ENCODE measurements at regions of chr9 and their contacts with region 1.

Region 1: GRCh38 chr9:32968101-32969011 is 33.1 kb downstream of the APTX start:
- DNase-seq: peak; percentile 15 to 39 (median 30)
- H3K4me3 ChIP-seq: no peak overlapping the region
- H3K4me3 Mint-ChIP-seq: no peak overlapping the region
- H3K27ac ChIP-seq: no peak overlapping the region
- H3K27ac Mint-ChIP-seq: no peak overlapping the region
- H3K4me1 ChIP-seq: no peaks in the 10 kb centered on the region
- H3K4me1 Mint-ChIP-seq: no peaks in the 10 kb centered on the region
- H3K27me3 ChIP-seq: no peaks in the 10 kb centered on the region
- H3K27me3 Mint-ChIP-seq: peaks cover 0 to 4% (median 2%) of the 10 kb centered on the region in 3 donors
- CTCF ChIP-seq: peak; percentile 83

Region 2: DNA sequence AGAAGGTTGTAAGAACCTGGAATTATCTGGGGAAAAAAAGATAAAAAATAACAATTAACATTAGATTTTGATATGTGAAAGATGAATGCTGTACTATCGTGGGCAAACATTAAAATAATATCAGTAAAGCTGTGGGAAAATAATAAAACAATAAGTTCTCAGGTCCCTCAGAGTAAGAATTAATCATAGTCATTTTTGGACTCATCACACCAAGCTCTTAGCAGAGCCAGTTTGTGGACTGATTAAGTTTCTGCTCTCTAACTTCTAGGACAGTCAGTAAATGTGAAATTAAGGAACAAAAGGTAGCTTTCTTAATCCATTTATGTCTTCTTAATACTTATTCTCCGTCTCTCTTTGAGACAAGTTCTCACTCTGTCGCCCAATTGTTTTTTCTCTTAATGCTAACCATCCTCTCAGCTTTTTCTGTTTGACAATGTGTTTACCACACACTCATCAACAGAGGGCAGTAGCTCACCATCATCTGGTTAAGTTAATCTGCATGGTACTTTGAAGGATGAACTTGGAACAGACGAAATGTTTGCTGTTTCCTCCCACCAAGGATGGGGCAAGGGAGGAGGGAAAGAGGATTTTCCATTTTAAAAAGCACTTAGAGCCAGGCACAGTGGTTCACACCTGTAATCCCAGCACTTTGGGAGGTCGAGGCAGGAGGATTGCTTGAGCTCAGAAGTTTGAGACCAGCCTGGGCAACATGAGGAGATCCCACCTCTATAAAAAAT is 589.2 kb before region 1 on chr9:
- intact Hi-C with region 1: loop called in 1 of 2 experiments (anchors 5 kb)
- DNase-seq: peak; percentile 50 to 68 (median 62)
- H3K4me3 ChIP-seq: no peak overlapping the region
- H3K4me3 Mint-ChIP-seq: no peak overlapping the region
- H3K27ac ChIP-seq: no peak overlapping the region
- H3K27ac Mint-ChIP-seq: no peak overlapping the region
- H3K4me1 ChIP-seq: peaks cover 7 to 8% of the 10 kb centered on the region in 2 donors
- H3K4me1 Mint-ChIP-seq: peaks cover 15% of the 10 kb centered on the region
- H3K27me3 ChIP-seq: peaks cover 13 to 17% of the 10 kb centered on the region in 2 donors
- H3K27me3 Mint-ChIP-seq: peaks cover 25 to 36% (median 26%) of the 10 kb centered on the region in 3 donors
- CTCF ChIP-seq: peak; percentile 66

Region 3: DNA sequence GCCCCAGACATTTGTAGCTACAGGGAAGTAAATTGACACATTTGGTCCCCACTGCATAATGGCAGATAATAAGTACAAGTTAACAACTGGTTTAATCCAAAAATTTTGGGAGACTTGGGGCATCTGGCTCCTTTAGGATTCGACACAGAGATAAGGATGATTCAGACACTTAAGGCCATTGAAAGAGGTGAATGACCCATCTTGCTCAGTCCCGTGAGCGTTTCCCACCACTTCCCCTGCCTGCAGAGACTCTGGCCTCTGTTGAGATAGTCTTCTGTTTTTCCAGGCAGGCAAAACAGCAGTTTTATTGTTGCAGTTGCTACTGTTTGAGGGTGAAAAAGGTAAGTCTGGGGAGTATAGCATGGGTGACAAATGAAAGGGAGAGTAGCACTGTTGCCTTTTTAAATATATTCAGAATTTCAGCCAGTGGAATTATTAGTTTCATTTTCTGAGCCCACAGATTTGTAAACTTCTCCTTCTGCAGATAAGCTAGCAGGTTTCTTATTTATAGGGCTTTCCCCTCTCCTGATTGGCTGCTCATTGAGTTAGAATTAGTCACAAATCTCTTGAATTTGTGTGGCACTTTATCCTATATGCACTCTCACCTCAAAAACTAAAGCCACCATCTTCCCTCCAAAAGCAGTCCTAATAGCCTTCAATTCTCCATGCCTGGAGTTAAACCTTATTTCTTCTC is 564.6 kb before region 1 on chr9:
- intact Hi-C with region 1: loop called in 1 of 2 experiments (anchors 10 kb)
- DNase-seq: no peak
- H3K4me3 ChIP-seq: no peak overlapping the region
- H3K4me3 Mint-ChIP-seq: peak overlapping the region in 1 of 2 donors; percentile 64
- H3K27ac ChIP-seq: no peak overlapping the region
- H3K27ac Mint-ChIP-seq: peak overlapping the region in 1 of 7 donors; percentile 0
- H3K4me1 ChIP-seq: no peaks in the 10 kb centered on the region
- H3K4me1 Mint-ChIP-seq: peaks cover 9% of the 10 kb centered on the region
- H3K27me3 ChIP-seq: no peaks in the 10 kb centered on the region
- H3K27me3 Mint-ChIP-seq: peaks cover 0 to 1% (median 0%) of the 10 kb centered on the region in 3 donors
- CTCF ChIP-seq: no peak

Region 4: DNA sequence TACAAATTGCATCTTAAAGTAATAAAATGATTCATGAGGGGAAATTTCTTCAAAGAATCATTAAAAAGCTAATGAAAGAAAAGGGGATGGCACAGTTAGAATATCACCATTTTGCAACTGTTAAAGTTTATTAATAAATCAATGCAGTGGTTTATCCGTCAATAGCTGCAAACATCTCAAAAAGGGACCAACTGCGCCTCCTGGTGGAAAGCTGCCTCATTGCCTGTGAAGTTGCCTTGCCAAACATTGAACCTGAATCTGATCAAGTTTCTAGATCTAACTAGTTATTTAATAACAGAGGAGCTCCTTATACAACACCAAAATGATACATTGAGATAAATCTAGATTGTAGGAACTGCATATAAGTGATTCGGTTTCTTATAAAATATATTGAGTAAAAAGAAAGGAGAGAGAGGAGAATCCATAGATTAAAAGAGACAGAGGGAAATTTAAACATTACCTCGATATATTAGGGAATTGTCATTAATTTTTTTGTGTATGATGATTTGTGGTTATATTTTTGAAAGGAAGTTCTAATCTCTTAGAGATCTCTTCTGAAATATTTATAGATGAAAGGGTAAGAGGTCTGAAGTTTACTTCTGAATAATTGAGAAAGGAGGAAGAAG is 388.5 kb before region 1 on chr9:
- intact Hi-C with region 1: loop called (anchors 5 to 10 kb)
- DNase-seq: peak; percentile 52 to 71 (median 56)
- H3K4me3 ChIP-seq: no peak overlapping the region
- H3K4me3 Mint-ChIP-seq: no peak overlapping the region
- H3K27ac ChIP-seq: no peak overlapping the region
- H3K27ac Mint-ChIP-seq: no peak overlapping the region
- H3K4me1 ChIP-seq: no peaks in the 10 kb centered on the region
- H3K4me1 Mint-ChIP-seq: no peaks in the 10 kb centered on the region
- H3K27me3 ChIP-seq: peaks cover 10 to 12% of the 10 kb centered on the region in 2 donors
- H3K27me3 Mint-ChIP-seq: peaks cover 19 to 38% (median 25%) of the 10 kb centered on the region in 3 donors
- CTCF ChIP-seq: peak; percentile 96

Measured in CD14-positive monocyte (primary cell).